Mammary epithelial cell (primary cell): ENCODE measurements at regions of chr11 and their contacts with region 1.

Region 1: DNA sequence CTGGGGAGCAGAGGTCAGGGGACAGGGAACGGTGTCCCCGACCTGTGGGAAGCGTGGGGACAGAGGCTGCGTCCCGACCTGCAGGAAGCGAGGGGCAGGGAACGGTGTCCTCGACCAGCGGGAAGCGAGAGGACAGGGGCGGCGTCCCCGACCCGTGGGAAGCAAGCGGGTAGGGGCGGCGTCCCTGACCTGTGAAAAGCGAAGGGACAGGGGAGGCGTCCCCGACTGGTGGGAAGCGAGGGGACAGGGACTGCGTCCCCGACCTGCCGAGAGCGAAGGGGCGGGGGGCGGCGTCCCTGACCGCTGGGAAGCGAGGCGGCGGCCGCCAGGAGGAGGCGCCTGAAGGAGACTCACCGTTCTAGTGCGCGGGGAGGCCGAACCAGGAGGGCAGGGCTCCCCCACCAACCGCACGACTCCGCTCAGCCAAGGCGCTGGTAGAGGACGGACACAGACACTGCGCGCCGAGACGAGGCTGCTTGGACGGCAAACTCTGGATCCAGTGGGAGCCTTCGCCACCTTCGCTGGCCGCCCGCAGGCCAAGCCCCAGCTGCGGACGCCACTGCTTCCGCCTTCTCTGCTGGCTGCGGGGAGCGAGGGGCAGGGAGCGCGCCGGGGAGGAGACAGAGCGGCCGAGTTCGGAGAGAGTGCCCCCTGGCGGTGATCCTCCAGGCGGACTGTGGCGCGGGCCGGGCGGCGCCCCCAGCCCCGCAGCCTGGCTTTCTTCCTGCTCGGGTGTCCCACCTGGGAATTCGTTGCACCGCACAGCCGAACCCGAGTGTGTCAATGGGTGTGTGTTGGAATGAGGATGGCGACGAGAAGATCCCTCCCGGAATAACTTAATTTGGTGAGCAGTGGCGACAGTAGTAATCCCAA is at the start of gene TRAF6:
- DNase-seq: peak; percentile 81
- H3K4me3 ChIP-seq: peak within 1 kb of the TSS; percentile 57 to 90 (median 80)
- H3K27ac ChIP-seq: peak within 1 kb of the TSS; percentile 79
- H3K4me1 ChIP-seq: peaks cover 11% of the 10 kb centered on the region
- H3K27me3 ChIP-seq: no peaks in the 10 kb centered on the region
- CTCF ChIP-seq: peak; percentile 61 to 85
- total RNA-seq, gene TRAF6: 11.2 to 21.0 TPM

Region 2: DNA sequence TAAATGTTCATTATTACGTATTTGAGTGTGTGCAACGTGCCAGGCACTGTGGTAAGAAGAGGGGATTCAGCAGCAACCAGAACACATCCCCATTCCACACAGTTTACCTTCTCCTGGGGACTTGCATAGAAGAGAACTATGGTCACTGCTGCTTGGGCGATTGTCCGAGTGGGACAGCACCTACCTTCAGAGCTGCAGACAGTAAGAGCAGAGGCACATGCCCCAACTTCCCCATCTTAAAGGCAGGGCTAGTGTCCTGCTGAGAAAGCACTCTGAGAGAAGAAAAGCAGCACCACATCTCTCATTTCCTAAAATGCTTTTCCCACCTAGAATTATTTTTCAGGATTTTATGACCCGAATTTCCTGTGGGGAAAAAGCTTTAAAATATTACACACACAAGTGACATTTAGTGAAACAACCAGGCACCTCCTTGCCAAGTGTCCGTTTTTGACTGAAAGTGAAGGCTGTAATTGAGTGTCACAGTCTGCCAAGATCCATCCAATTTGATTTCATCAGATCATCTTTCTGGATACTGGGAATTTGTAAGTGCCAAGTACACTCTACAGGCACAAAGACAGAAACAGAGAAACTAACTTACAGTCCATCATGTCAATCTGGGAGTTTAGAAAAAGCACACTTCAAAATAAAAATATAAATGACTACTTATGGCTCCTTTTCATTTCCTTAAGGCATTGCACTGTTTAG is 24.5 kb before region 1 on chr11:
- CTCF ChIA-PET with region 1: no interaction called
- dilution Hi-C with region 1: no loop called
- in situ Hi-C with region 1: no loop called
- intact Hi-C with region 1: no loop called
- DNase-seq: no peak
- H3K4me3 ChIP-seq: no peak overlapping the region
- H3K27ac ChIP-seq: no peak overlapping the region
- H3K4me1 ChIP-seq: no peaks in the 10 kb centered on the region
- H3K27me3 ChIP-seq: no peaks in the 10 kb centered on the region
- CTCF ChIP-seq: no peak

Region 3: GRCh38 chr11:36605221-36606216 is 95.6 kb after region 1 on chr11:
- CTCF ChIA-PET with region 1: no interaction called
- dilution Hi-C with region 1: no loop called
- in situ Hi-C with region 1: no loop called
- intact Hi-C with region 1: no loop called
- DNase-seq: no peak
- H3K4me3 ChIP-seq: no peak overlapping the region
- H3K27ac ChIP-seq: no peak overlapping the region
- H3K4me1 ChIP-seq: no peaks in the 10 kb centered on the region
- H3K27me3 ChIP-seq: no peaks in the 10 kb centered on the region
- CTCF ChIP-seq: no peak

Region 4: GRCh38 chr11:36746886-36747710 is 237.2 kb after region 1 on chr11:
- CTCF ChIA-PET with region 1: no interaction called
- dilution Hi-C with region 1: no loop called
- in situ Hi-C with region 1: no loop called
- intact Hi-C with region 1: loop called (anchors 5 kb)
- DNase-seq: peak; percentile 78
- H3K4me3 ChIP-seq: no peak overlapping the region
- H3K27ac ChIP-seq: no peak overlapping the region
- H3K4me1 ChIP-seq: no peaks in the 10 kb centered on the region
- H3K27me3 ChIP-seq: no peaks in the 10 kb centered on the region
- CTCF ChIP-seq: peak; percentile 100